Heart right ventricle (tissue), 16 donors: ENCODE measurements at regions of chr1 and their contacts with region 1.

Region 1: DNA sequence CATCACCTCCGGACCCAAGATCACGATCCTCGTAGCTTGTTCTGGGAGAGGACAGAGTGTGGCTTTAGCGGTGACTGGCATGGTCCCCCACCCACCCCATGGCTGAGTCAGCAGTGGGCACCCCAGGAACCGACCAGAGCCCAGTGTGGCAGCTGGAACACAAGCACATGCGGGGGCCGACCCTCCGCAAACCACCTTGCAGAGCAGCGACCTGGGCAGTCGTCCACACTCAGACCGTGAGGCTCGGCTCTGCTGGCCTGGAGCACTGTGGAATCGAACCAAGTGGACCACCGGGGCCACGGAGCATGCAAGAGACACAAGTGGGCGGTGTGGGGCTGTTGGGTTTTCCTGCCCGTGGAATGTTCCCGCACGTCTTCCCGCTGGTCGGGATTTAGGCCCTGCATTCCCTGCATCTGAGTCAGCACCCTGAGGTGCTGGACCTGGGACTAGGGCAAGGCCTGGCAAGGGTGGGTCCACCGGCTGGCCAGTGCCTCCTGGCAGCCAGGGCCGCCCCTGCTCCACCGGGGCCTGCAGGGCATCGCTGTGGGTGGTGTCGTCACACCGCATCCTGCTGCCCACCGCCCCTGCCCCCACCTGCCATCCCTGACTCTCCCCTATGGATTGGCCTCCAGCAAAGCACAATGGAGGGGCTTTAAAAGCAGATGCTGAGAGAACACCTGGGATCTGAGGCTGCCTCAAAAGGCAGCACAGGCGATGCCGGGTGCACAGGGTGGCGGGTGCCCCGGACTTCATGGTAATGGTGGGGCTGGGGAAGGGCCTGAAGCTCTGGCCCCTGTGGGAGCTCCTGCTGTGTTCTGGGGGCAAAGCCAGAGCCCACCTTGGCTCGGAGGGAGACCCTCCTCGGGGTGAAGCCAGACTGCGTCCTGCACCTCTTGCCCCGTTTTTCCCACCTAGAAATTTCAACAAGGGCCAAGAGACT is 18.5 kb downstream of the MORN1 start:
- DNase-seq: no peak
- ATAC-seq: no peak
- H3K4me3 ChIP-seq: no peak overlapping the region
- H3K27ac ChIP-seq: no peak overlapping the region
- H3K4me1 ChIP-seq: no peaks in the 10 kb centered on the region
- H3K27me3 ChIP-seq: no peaks in the 10 kb centered on the region
- CTCF ChIP-seq: no peak

Region 2: GRCh38 chr1:1996207-1996651 is 376.6 kb before region 1 on chr1:
- intact Hi-C with region 1: no loop called
- DNase-seq: no peak
- ATAC-seq: peak in 2 of 8 donors; percentile 22 to 51
- H3K4me3 ChIP-seq: no peak overlapping the region
- H3K27ac ChIP-seq: peak overlapping the region in 2 of 10 donors; percentile 34 to 53
- H3K4me1 ChIP-seq: peaks cover 0 to 10% (median 2%) of the 10 kb centered on the region in 9 donors
- H3K27me3 ChIP-seq: peaks cover 0 to 27% (median 7%) of the 10 kb centered on the region in 7 donors
- CTCF ChIP-seq: no peak

Region 3: GRCh38 chr1:2322065-2322571 is 50.7 kb before region 1 on chr1:
- intact Hi-C with region 1: loop called in 2 of 10 experiments (anchors 5 to 10 kb)
- DNase-seq: peak; percentile 79 to 81
- ATAC-seq: peak; percentile 57 to 83 (median 78)
- H3K4me3 ChIP-seq: peak overlapping the region in 7 of 10 donors; percentile 4 to 42 (median 23)
- H3K27ac ChIP-seq: peak overlapping the region; percentile 40 to 82 (median 66)
- H3K4me1 ChIP-seq: peaks cover 16 to 61% (median 37%) of the 10 kb centered on the region in 9 donors
- H3K27me3 ChIP-seq: peaks cover 0 to 25% (median 0%) of the 10 kb centered on the region in 7 donors
- CTCF ChIP-seq: peak in 3 of 9 donors; percentile 8 to 29 (median 29)

Region 4: GRCh38 chr1:2330511-2331199 is 42.2 kb before region 1 on chr1:
- intact Hi-C with region 1: loop called in 3 of 10 experiments (anchors 5 to 10 kb)
- DNase-seq: no peak
- ATAC-seq: peak; percentile 38 to 82 (median 72)
- H3K4me3 ChIP-seq: no peak overlapping the region
- H3K27ac ChIP-seq: peak overlapping the region in 6 of 10 donors; percentile 18 to 49 (median 35)
- H3K4me1 ChIP-seq: peaks cover 8 to 18% (median 10%) of the 10 kb centered on the region in 9 donors
- H3K27me3 ChIP-seq: no peaks in the 10 kb centered on the region
- CTCF ChIP-seq: peak in 2 of 9 donors; percentile 6 to 17